Left cardiac atrium (tissue), 4 donors: ENCODE measurements at regions of chr19 and their contacts with region 1.

Region 1: DNA sequence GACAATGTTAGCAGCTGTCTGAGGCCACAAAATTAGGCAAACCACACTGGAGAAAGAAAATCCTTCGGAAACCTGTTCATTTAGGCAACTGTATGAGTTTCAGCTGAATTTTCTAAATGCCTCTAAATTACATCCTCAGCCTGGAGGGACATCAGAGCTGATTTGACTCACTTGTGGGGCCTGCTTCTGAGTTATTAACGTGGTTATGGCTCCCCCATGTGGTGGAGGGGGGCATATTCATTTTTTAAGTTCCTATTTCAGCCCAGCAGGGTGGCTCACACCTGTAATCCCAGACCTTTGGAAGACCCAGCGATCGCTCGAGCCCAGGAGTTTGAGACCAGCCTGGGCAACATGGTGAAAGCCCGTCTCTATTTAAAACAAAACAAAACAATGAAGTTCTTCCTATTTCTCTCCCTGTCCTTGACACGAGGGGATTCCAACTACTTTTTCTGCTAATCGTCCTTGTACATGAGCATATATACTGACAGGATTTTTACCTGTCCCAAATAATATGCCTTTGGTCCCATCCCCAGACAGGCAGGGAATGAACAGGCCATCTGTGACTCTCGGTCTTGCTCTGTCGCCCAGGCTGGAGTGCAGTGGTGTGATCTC is 31.5 kb upstream of the HIF3A start:
- DNase-seq: peak; percentile 39
- ATAC-seq: peak; percentile 83 to 86

Region 2: GRCh38 chr19:46025835-46026234 is 239.5 kb before region 1 on chr19:
- intact Hi-C with region 1: loop called (anchors 1 to 5 kb)
- DNase-seq: no peak
- ATAC-seq: no peak

Region 3: DNA sequence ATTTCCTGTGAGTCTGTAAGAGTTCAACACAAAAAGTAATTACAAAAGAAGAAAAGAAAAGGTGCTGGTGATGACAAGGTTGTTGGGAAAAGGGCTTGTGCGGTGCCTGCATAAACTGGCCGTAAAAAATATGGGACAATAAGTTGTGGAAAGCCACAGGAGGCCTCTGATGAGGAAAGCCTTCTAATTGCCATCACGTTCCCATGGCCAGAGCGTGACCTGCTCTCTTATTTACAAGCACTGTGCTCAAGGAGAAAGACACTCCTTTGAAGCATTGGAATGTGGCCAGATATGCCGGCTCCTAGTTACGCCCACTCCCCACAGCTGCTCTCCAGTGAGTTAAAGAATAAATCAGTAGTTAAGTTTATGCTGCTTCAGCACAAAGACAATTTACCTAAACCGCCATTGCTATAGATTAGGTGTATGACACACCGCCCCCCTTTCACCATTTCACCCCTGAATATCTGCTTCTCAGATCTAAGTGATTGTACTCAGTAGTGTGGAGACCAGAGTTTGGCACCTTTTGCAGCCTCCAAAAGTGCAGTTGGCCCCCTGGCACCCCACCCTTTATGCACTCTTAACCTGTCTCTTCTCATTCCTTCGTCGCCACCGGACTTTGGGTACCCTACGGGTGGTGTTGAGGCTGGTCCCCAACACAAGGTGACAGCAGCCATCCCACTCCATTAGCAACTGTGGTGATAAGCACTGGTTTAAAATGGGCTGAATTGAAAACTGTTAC is 234.3 kb before region 1 on chr19:
- intact Hi-C with region 1: loop called (anchors 1 to 5 kb)
- DNase-seq: no peak
- ATAC-seq: no peak

Region 4: DNA sequence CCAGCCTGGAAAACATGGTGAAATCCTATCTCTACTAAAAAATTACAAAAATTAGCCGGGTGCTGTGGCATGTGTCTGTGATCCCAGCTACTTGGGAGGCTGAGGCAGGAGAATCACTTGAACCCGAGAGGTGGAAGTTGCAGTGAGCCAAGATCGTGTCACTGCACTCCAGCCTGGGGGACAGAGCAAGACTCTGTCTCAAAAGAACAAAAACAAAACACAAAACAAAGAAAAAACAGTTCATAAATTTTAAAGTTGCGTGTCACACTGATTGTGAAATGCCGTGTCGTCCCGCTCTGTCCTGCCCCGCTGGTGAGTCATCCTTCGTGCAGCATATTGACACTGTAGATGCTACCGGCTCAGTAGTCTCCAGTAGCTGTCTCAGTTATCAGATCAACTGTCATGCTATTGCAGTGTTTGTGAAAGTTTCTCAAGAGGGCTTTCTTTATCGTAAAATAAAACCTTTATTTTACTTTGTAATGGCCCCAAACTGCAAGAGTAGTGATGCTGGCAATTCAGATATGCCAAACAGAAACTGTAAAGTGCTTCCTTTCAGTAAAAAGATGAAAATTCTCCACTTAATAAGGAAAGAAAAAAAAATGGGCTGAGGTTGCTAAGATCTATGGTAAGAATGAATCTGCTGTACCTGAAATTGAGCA is 72.2 kb before region 1 on chr19:
- intact Hi-C with region 1: loop called in 1 of 2 experiments (anchors 5 kb)
- DNase-seq: peak; percentile 51
- ATAC-seq: peak in 1 of 2 donors; percentile 69

Region 5: GRCh38 chr19:46461537-46461936 is 196.2 kb after region 1 on chr19:
- intact Hi-C with region 1: no loop called
- DNase-seq: no peak
- ATAC-seq: no peak